Sigmoid colon (tissue), 7 donors: ENCODE measurements at regions of chr1 and their contacts with region 1.

Region 1: GRCh38 chr1:95043141-95043980 is 29.4 kb downstream of the ALG14 start:
- DNase-seq: peak; percentile 93
- H3K4me3 ChIP-seq: no peak overlapping the region
- H3K27ac ChIP-seq: peak overlapping the region; percentile 74 to 81 (median 79)
- H3K4me1 ChIP-seq: peaks cover 0 to 23% (median 19%) of the 10 kb centered on the region in 4 donors
- H3K27me3 ChIP-seq: no peaks in the 10 kb centered on the region
- CTCF ChIP-seq: peak; percentile 99 to 100 (median 99)
- EP300 ChIP-seq: no peak
- POLR2A ChIP-seq: no peak

Region 2: GRCh38 chr1:94522304-94522703 is 521.1 kb before region 1 on chr1:
- intact Hi-C with region 1: loop called (anchors 5 kb)
- DNase-seq: no peak
- H3K4me3 ChIP-seq: no peak overlapping the region
- H3K27ac ChIP-seq: no peak overlapping the region
- H3K4me1 ChIP-seq: peaks cover 0 to under 1% (median 0%) of the 10 kb centered on the region in 4 donors
- H3K27me3 ChIP-seq: no peaks in the 10 kb centered on the region
- CTCF ChIP-seq: peak in 3 of 4 experiments; percentile 38 to 57 (median 39)
- EP300 ChIP-seq: no peak
- POLR2A ChIP-seq: no peak

Region 3: DNA sequence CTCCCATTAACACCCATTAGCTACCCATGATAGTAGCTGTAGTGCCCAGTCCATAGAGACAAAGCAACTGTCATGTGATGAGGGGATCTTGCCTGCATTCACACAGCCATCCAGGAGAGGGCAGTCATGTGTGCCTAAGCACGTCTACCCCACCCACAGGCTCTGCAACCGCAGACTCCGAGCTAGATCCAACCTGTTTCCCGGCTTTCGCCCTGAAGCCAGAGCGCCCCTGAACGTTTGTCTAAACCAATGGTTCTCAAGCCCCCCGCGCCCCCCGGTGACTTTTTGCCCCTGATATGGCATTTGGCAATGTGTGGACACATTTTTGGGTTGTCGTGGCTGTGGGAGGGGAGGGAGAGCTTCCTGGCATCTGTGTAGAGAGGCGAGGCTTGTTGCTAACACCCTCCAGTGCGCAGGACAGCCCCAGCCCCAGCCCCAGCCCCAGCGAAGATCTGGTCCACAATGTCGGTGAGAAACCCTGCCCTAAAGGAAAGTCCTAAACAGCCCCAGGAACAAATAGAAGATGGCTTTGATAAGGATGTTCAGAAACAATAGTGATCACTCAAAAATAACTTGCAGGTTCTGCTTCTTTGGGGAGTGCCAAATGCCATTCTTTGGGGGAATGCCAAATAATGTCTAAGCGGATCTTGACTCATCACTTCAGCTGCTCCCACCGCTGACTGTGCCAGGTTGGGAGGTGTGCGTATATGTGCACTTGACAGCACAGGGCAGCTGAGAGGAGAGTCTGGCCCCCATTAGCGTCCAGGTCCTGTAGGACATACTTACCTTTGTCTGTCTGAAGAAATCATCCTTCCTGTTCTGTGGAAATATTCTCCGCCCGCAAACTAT is 188.7 kb before region 1 on chr1:
- intact Hi-C with region 1: loop called (anchors 1 kb)
- DNase-seq: peak; percentile 96
- H3K4me3 ChIP-seq: peak overlapping the region; percentile 29 to 49 (median 48)
- H3K27ac ChIP-seq: peak overlapping the region; percentile 80 to 90 (median 84)
- H3K4me1 ChIP-seq: peaks cover 0 to 25% (median 18%) of the 10 kb centered on the region in 4 donors
- H3K27me3 ChIP-seq: no peaks in the 10 kb centered on the region
- CTCF ChIP-seq: peak; percentile 87 to 99 (median 98)
- EP300 ChIP-seq: no peak
- POLR2A ChIP-seq: no peak